ENCODE measurements at regions of chr9 and their contacts with region 1.

Region 1: GRCh38 chr9:37904445-37905130 is 661 bp upstream of the SLC25A51 start:
- DNase-seq: peak in 1 of 2 donors; percentile 34
- H3K4me3 ChIP-seq: peak overlapping the region; percentile 64 to 71
- H3K27ac ChIP-seq: peak overlapping the region; percentile 85 to 87
- H3K4me1 ChIP-seq: peaks cover 6 to 10% of the 10 kb centered on the region in 2 donors
- H3K27me3 ChIP-seq: no peaks in the 10 kb centered on the region
- CTCF ChIP-seq: no peak
- POLR2A ChIP-seq: no peak

Region 2: GRCh38 chr9:38352530-38353328 is 448.1 kb after region 1 on chr9:
- intact Hi-C with region 1: loop called (anchors 5 kb)
- DNase-seq: no peak
- H3K4me3 ChIP-seq: no peak overlapping the region
- H3K27ac ChIP-seq: no peak overlapping the region
- H3K4me1 ChIP-seq: no peaks in the 10 kb centered on the region
- H3K27me3 ChIP-seq: no peaks in the 10 kb centered on the region
- CTCF ChIP-seq: no peak
- POLR2A ChIP-seq: no peak

Measured in uterus (tissue), 4 donors.